Activated CD4-positive, alpha-beta T cell treated with anti-CD3 and anti-CD28 coated beads for 36 hours (primary cell): ENCODE measurements at regions of chr22 and their contacts with region 1.

Region 1: GRCh38 chr22:33302049-33302545 is 243.9 kb upstream of the SYN3 start:
- DNase-seq: peak; percentile 81
- ATAC-seq: peak; percentile 51
- H3K4me3 Mint-ChIP-seq: no peak overlapping the region
- H3K27ac Mint-ChIP-seq: no peak overlapping the region
- H3K4me1 Mint-ChIP-seq: no peaks in the 10 kb centered on the region
- H3K27me3 Mint-ChIP-seq: peaks cover 8% of the 10 kb centered on the region

Region 2: DNA sequence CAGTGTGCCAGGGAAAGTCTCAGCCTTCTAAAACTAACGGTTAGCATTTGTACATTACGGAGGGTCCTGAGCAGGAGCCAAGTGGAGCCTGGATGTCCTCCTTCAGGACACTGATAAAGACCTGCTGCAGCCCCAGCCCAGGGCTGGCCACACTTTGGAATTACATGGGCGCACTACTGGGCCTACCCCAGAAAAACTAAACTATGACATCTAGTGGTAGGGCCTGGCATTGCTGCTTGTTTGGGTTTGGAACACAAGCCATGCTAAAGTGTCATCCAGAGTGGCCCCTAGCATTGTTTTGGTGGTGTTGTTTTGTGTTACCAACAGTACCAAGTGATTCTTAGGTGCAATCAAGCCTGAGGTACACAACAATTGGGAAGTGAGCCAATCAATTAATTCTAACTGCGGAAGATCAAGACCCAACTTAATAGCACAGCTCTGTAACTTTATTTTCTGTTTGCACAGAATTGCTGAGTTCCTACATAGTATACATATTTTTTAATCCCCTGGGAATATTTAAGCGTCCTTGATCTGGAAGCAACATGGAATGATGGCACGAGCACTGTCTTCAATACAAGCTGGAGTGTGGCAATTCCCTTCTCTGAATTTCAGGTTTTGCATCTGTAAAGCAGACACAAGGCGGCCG is 277.5 kb after region 1 on chr22:
- CTCF ChIA-PET with region 1: interaction called, 6 read pairs
- POLR2A ChIA-PET with region 1: no interaction called
- intact Hi-C with region 1: loop called (anchors 1 kb)
- DNase-seq: peak; percentile 59
- ATAC-seq: no peak
- H3K4me3 Mint-ChIP-seq: no peak overlapping the region
- H3K27ac Mint-ChIP-seq: no peak overlapping the region
- H3K4me1 Mint-ChIP-seq: no peaks in the 10 kb centered on the region
- H3K27me3 Mint-ChIP-seq: no peaks in the 10 kb centered on the region

Region 3: DNA sequence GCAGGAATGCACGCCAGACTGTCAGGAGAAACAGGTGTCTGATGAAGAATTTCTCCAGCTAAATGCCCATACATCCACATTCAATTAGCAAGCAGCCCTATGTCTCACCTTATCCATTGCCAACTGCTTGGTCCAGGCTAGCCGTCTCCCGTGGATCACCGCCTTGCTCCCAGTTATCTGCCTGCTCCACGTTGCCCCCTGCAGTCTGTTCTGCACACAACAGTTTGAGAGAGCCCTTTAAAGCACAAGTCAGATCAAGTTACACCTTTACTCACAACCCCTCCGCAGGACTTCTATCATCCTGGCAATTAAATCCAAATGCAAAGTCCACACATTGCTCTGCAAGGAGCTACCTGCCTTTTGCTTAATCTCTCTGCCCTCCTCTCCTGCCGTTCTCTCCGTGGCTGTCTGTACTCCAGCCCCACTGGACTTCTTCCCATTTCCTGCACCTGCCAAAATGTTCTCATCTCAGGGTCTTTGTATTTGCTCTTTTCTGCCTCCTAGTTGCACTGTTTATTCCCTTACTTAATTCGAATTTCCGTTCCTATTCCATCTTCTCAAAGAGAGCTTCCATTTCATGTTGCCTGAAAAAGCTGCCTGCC is 803.5 kb after region 1 on chr22:
- CTCF ChIA-PET with region 1: interaction called, 3 read pairs
- POLR2A ChIA-PET with region 1: no interaction called
- intact Hi-C with region 1: loop called in 1 of 2 experiments (anchors 5 kb)
- DNase-seq: peak; percentile 53
- ATAC-seq: no peak
- H3K4me3 Mint-ChIP-seq: no peak overlapping the region
- H3K27ac Mint-ChIP-seq: no peak overlapping the region
- H3K4me1 Mint-ChIP-seq: no peaks in the 10 kb centered on the region
- H3K27me3 Mint-ChIP-seq: no peaks in the 10 kb centered on the region

Region 4: GRCh38 chr22:35023692-35024363 is 1721.7 kb after region 1 on chr22:
- CTCF ChIA-PET with region 1: no interaction called
- POLR2A ChIA-PET with region 1: no interaction called
- intact Hi-C with region 1: loop called in 1 of 2 experiments (anchors 5 kb)
- DNase-seq: peak; percentile 87
- ATAC-seq: no peak
- H3K4me3 Mint-ChIP-seq: no peak overlapping the region
- H3K27ac Mint-ChIP-seq: no peak overlapping the region
- H3K4me1 Mint-ChIP-seq: no peaks in the 10 kb centered on the region
- H3K27me3 Mint-ChIP-seq: peaks cover 25% of the 10 kb centered on the region

Region 5: DNA sequence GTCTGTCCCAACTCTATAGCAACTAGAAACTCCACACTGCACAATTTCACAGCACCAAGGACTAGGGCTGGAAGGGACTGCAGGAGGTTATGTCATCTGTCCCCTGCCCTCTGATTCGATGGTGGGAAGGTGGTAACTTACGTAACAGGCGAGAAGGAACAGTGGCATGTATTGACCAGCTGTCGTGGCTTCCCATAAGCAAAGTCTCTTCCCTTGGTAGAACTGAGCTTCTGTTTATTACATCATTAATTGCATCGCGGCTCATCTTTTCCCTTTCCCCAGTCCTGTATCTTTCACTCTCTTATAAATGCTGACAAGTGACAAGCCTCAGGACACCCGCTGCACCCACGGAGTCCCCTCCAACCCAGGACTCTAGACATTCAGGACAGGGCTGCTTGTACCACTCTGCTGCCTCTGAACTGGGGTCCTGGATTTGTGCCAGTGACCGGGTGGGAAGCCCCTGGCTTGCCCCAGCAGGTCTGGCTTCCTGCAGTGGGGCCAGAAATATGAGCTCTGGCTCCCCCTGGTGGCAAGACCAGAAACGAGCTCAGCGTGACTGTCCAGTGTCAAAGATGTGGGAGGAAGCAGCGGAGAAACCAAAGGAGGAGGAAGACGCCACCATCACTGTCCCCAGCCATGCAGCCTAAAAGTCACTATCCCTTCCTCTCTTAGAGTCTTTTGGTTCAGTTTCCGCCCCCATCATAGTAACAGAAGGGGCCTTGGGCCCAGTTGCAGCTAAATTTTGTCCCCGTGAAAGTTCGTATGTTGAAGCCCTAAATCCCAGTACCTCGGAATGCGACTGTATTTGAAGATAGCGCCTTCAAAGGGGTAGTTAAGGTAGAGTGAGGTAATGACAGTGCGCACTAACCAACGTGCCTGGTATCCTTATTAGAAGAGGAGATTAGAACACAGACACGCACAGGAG is 1848.3 kb after region 1 on chr22:
- CTCF ChIA-PET with region 1: interaction called, 7 read pairs
- POLR2A ChIA-PET with region 1: no interaction called
- intact Hi-C with region 1: loop called in 1 of 2 experiments (anchors 1 kb)
- DNase-seq: peak; percentile 81
- ATAC-seq: peak; percentile 72
- H3K4me3 Mint-ChIP-seq: no peak overlapping the region
- H3K27ac Mint-ChIP-seq: no peak overlapping the region
- H3K4me1 Mint-ChIP-seq: no peaks in the 10 kb centered on the region
- H3K27me3 Mint-ChIP-seq: peaks cover 20% of the 10 kb centered on the region